ENCODE measurements at regions of chr10 and their contacts with region 1.

Region 1: GRCh38 chr10:3068201-3068967 is 1.0 kb downstream of the PFKP start:
- DNase-seq: peak; percentile 50
- H3K4me3 ChIP-seq: peak overlapping the region; percentile 52 to 72
- H3K27ac ChIP-seq: peak overlapping the region; percentile 59 to 70
- H3K4me1 ChIP-seq: peaks cover 3% of the 10 kb centered on the region
- H3K27me3 ChIP-seq: no peaks in the 10 kb centered on the region
- CTCF ChIP-seq: peak in 2 of 4 experiments; percentile 32 to 38
- POLR2A ChIP-seq: no peak

Region 2: GRCh38 chr10:3172446-3173170 is 104.2 kb after region 1 on chr10 and contains the start of gene PITRM1:
- intact Hi-C with region 1: loop called (anchors 5 kb)
- DNase-seq: peak; percentile 99
- H3K4me3 ChIP-seq: peak within 1 kb of the TSS; percentile 68 to 69
- H3K27ac ChIP-seq: peak within 1 kb of the TSS; percentile 75 to 85
- H3K4me1 ChIP-seq: no peaks in the 10 kb centered on the region
- H3K27me3 ChIP-seq: no peaks in the 10 kb centered on the region
- CTCF ChIP-seq: peak in 2 of 4 experiments; percentile 15 to 32
- POLR2A ChIP-seq: peak; percentile 99
- total RNA-seq, gene PITRM1: 47.7 to 103 TPM

Measured in prostate gland (tissue), 2 donors.